ENCODE measurements at regions of chr3 and their contacts with region 1.

Region 1: GRCh38 chr3:49411968-49412631 is at the starts of genes RHOA and TCTA:
- DNase-seq: peak; percentile 99
- H3K4me3 ChIP-seq: peak within 1 kb of the TSS; percentile 88 to 98
- H3K27ac ChIP-seq: peak within 1 kb of the TSS; percentile 89 to 97
- H3K4me1 ChIP-seq: peaks cover 11% of the 10 kb centered on the region
- H3K27me3 ChIP-seq: no peaks in the 10 kb centered on the region
- CTCF ChIP-seq: peak in 1 of 4 experiments; percentile 8
- POLR2A ChIP-seq: peak; percentile 81
- total RNA-seq, gene RHOA: 296 to 343 TPM
- total RNA-seq, gene TCTA: 39.6 to 70.0 TPM

Region 2: DNA sequence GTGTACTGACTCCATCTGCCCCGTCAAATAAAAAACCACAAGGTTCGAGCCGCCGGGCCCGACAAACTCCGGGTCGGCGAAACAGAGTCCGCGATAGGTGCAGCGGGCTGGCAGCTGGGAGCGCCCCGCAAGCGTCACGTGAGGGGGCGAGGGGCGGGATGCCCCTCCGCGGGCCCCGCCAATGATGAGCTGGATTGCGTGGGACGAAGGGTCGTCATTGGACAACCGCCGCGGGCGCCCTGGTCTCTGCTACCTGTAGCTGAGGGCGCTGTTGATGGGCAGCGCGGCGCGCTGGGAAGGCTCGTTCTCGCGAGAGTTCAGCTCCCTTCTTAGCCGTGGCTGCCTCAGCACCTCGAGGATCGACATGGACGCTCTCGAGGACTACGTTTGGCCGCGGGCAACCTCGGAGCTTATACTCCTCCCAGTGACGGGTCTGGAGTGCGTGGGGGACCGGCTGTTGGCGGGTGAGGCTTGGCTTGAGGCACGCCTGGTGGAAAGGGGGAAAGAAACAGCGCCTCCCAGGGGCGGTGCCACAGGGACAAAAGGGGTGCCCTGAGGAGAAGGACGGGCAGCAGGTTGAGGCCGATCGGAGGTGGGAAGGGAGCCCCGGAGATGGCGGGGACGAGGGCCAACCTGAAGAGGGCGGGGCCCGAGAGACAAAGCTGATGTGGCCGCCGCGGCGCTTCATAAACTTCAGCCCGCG is 404.9 kb before region 1 on chr3 and contains the start of gene WDR6:
- intact Hi-C with region 1: loop called (anchors 10 kb)
- DNase-seq: peak; percentile 98
- H3K4me3 ChIP-seq: peak within 1 kb of the TSS; percentile 55 to 67
- H3K27ac ChIP-seq: peak within 1 kb of the TSS; percentile 93 to 97
- H3K4me1 ChIP-seq: peaks cover 13% of the 10 kb centered on the region
- H3K27me3 ChIP-seq: no peaks in the 10 kb centered on the region
- CTCF ChIP-seq: peak; percentile 37 to 73 (median 56)
- POLR2A ChIP-seq: peak; percentile 75
- total RNA-seq, gene WDR6: 128 to 223 TPM

Region 3: DNA sequence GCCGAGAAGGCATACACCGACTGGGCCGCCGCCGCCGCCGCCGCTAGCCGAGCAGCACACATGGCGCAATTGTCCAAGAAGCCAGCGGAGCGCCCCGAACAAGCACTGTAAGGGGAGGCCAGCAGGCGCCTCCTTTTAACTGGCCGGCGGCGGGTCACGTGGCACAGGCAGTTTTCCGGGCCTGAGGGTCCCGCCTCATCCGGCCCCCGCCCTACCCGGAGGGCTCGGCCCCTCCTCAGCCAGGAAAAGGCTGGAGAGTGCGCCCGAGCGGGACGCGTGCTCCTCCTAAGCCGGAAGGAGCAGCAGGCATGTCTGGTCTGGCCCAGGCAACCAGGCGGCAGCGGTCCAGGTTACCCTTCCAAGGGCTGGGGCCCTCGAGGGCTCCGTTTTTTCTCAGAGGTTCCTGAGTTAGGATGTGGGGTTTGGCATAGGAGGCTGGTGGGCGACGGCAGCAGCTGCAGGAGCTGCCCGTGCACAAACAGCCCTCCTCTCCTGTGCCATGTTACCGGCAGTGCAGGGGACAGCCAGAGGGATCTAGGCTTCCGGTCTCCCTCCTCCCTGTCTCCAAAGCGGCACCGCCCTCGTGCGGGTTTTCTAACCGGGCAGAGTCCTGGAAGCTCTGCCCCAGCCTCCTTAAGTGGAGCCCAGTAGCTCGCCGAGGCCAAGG is 53.8 kb before region 1 on chr3 and contains the start of gene GPX1:
- intact Hi-C with region 1: loop called (anchors 5 kb)
- DNase-seq: peak; percentile 97
- H3K4me3 ChIP-seq: peak within 1 kb of the TSS; percentile 48 to 74
- H3K27ac ChIP-seq: peak within 1 kb of the TSS; percentile 81 to 84
- H3K4me1 ChIP-seq: peaks cover 8% of the 10 kb centered on the region
- H3K27me3 ChIP-seq: no peaks in the 10 kb centered on the region
- CTCF ChIP-seq: peak in 1 of 4 experiments; percentile 33
- POLR2A ChIP-seq: peak; percentile 98
- total RNA-seq, gene GPX1: 250 to 279 TPM

Region 4: DNA sequence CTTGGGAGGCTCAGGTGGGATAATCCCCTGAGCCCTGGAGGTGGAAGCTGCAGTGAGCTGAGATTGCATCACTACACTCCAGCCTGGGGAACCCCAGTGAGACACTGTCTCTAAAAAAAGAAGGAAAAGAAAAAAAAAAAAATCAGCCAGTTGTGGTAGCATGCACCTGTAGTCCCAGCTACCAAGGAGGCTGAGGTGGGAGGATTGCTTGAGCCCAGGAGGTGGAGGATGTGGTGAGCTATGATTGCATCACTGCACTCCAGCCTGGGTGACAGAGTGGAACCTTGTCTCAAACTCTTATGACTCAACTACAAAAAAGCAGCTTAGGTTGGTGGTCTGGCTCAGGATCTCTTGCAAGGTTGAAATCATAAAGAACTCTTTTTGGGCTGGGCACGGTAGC is 34.6 kb before region 1 on chr3:
- intact Hi-C with region 1: no loop called
- DNase-seq: no peak
- H3K4me3 ChIP-seq: no peak overlapping the region
- H3K27ac ChIP-seq: no peak overlapping the region
- H3K4me1 ChIP-seq: no peaks in the 10 kb centered on the region
- H3K27me3 ChIP-seq: no peaks in the 10 kb centered on the region
- CTCF ChIP-seq: no peak
- POLR2A ChIP-seq: no peak

Region 5: GRCh38 chr3:49469936-49470713 is 58.0 kb after region 1 on chr3 and contains the start of gene DAG1:
- intact Hi-C with region 1: loop called (anchors 5 kb)
- DNase-seq: peak; percentile 97
- H3K4me3 ChIP-seq: peak within 1 kb of the TSS; percentile 78 to 82
- H3K27ac ChIP-seq: peak within 1 kb of the TSS; percentile 95 to 98
- H3K4me1 ChIP-seq: peaks cover 18% of the 10 kb centered on the region
- H3K27me3 ChIP-seq: no peaks in the 10 kb centered on the region
- CTCF ChIP-seq: peak in 1 of 4 experiments; percentile 4
- POLR2A ChIP-seq: peak; percentile 67
- total RNA-seq, gene DAG1: 86.7 to 213 TPM